ENCODE measurements at regions of chr3 and their contacts with region 1.

Region 1: DNA sequence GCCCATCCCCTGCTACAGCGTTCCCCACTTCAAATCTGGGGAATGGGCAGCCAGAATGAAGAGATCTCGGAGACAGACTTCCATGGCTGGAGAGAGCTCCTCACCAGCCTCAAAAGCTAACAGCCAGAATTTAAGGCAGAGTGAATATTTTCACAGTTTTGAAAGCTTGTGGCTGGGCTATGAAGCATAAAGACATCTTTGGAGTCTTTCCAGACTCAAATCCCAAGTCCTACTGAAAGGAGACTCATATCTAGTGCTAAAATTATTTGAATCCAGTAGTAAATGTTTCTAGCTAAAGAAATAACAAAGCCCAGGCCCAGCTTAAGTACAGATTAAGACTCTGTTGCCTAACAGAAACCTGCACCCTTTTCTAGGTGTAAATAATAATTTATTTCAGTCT is 628.4 kb upstream of the ALCAM start:
- DNase-seq: no peak
- ATAC-seq: no peak

Region 2: DNA sequence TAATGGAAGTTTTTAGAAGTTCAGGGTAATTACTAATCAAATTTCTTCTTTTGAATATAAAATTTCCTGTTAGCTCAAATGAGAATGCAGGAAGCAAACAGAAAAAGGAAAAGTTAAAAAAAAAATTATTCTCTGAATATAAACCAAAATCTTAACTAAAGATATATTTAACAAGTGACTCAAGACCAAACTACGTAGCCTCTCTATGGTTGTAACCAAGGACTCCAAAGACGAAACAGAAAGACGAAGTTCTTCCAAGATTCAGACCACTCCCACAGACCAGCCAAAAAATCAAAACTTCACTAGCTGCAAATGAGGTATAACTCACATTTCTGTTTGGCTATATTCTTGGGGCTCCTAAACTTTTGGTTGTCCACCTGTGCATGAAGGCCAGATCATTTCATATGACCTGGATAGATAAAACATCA is 218.0 kb before region 1 on chr3:
- intact Hi-C with region 1: no loop called
- DNase-seq: no peak
- ATAC-seq: no peak

Region 3: DNA sequence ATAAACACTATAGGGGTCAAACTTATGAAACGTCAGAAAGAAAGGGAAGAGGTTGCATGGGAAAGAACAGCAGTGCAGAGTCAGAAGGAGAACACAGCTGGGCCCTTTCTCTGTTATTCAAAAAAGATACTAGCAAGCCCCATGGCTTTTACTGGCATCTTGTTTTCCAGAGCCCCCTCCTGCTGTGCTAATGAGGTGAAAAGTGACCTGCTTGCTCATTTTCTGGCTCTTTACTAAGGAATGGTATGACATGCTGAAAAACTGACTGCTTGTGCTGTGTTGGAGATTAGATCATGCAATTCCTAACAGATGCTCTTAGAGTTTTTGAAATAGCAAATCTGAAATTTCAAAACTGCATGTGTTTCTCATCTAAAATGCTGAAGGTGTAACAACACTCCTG is 86.8 kb after region 1 on chr3:
- intact Hi-C with region 1: no loop called
- DNase-seq: no peak
- ATAC-seq: no peak

Region 4: DNA sequence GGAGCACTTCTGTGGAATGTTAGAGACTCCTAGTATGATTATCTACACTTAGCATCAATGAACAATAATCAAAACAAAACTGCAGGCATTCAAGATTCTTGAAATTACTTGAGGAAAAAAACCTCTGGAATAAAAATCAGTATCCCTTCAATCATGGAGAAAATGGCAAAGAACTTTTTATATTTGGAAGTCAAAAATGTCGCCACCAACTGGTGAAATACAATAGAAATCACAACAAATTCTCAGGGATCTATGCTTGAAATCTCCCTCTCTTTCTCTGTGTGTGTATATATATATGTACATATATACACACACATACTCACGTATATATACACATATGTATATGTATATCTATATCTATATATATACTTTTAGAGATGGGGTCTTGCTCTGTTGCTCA is 249.6 kb after region 1 on chr3:
- intact Hi-C with region 1: loop called (anchors 5 kb)
- DNase-seq: no peak
- ATAC-seq: no peak

Measured in Right ventricle myocardium inferior (tissue), 1 donor.